Lower lobe of right lung (tissue), 2 donors: ENCODE measurements at regions of chr3 and their contacts with region 1.

Region 1: GRCh38 chr3:195537995-195538394 is 5.1 kb downstream of the PPP1R2 start:
- DNase-seq: no peak
- ATAC-seq: no peak
- H3K4me3 ChIP-seq: no peak overlapping the region
- H3K27ac ChIP-seq: no peak overlapping the region
- H3K4me1 ChIP-seq: peaks cover 57% of the 10 kb centered on the region
- H3K27me3 ChIP-seq: no peaks in the 10 kb centered on the region
- CTCF ChIP-seq: no peak

Region 2: DNA sequence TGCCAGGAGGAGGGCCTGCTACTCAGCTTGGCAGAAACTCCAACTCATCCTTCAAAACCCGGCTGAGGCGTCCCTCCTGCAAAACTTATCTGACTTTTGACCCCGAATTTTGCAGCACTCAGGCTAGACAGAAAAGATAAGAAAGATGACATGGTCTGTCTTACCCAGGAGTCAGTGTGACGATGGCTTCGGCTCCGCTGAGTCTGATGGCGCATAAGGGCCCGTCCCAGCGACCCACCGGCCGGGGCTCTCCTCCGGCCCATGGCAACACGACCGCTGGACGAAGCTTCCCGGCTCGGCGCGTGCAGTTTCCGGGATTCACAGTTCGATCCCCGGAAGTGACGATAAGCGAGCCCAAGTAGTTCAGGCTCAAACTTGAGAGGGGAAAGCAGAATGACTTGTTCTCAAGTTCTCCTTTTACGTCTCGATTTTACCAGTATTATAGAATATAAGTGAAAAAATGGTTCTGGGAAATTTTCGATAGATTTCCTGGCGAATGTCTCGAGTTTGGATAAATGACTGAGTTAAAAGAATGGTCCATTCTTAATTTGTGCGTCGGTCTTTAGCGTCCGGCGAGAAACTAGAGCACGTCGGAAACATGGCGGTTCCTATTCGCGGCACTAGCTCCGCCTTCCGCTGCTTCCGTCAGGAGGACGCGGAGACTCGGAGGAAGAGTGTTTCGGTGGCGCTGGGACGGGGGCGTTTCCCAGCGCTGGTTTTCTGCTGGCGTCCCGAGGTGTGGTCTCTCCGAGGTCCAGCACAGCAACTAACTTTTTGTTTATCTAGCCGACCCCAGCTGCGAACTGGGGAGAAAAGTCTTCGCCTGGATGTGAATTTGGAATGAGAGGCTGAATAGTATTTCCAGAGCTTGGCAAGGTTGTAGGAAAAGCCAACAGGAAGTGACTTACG is 865.8 kb before region 1 on chr3 and contains the start of gene LSG1:
- intact Hi-C with region 1: loop called (anchors 10 kb)
- DNase-seq: peak; percentile 94
- ATAC-seq: peak; percentile 98
- H3K4me3 ChIP-seq: peak within 1 kb of the TSS; percentile 65
- H3K27ac ChIP-seq: peak within 1 kb of the TSS; percentile 95
- H3K4me1 ChIP-seq: peaks cover 15% of the 10 kb centered on the region
- H3K27me3 ChIP-seq: no peaks in the 10 kb centered on the region
- CTCF ChIP-seq: no peak
- total RNA-seq, gene LSG1: 40.9 TPM

Region 3: DNA sequence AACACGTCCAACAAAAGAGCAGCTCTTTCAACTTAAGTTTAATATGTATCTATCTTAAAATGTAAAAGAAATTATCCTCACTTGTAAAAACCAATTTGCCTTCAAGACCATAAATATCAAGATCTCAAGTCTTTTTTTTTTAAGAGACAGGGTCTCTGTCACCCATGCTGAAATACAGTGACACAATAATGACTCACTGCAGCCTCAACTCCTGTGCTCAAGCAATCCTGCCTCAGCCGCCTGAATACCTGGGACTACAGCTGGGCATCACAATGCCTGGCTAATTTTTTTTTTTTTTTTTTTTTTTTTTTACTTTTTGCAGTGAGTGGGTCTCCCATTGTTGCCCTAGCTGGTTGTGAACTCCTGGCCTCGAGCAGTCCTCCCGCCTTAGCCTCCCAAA is 121.2 kb before region 1 on chr3:
- intact Hi-C with region 1: no loop called
- DNase-seq: no peak
- ATAC-seq: no peak
- H3K4me3 ChIP-seq: no peak overlapping the region
- H3K27ac ChIP-seq: no peak overlapping the region
- H3K4me1 ChIP-seq: peaks cover 17% of the 10 kb centered on the region
- H3K27me3 ChIP-seq: no peaks in the 10 kb centered on the region
- CTCF ChIP-seq: no peak

Region 4: GRCh38 chr3:195876297-195877031 is 338.5 kb after region 1 on chr3:
- intact Hi-C with region 1: no loop called
- DNase-seq: peak; percentile 81
- ATAC-seq: peak; percentile 77 to 83
- H3K4me3 ChIP-seq: no peak overlapping the region
- H3K27ac ChIP-seq: no peak overlapping the region
- H3K4me1 ChIP-seq: peaks cover 6% of the 10 kb centered on the region
- H3K27me3 ChIP-seq: no peaks in the 10 kb centered on the region
- CTCF ChIP-seq: no peak